ENCODE measurements at regions of chr7 and their contacts with region 1.

Region 1: DNA sequence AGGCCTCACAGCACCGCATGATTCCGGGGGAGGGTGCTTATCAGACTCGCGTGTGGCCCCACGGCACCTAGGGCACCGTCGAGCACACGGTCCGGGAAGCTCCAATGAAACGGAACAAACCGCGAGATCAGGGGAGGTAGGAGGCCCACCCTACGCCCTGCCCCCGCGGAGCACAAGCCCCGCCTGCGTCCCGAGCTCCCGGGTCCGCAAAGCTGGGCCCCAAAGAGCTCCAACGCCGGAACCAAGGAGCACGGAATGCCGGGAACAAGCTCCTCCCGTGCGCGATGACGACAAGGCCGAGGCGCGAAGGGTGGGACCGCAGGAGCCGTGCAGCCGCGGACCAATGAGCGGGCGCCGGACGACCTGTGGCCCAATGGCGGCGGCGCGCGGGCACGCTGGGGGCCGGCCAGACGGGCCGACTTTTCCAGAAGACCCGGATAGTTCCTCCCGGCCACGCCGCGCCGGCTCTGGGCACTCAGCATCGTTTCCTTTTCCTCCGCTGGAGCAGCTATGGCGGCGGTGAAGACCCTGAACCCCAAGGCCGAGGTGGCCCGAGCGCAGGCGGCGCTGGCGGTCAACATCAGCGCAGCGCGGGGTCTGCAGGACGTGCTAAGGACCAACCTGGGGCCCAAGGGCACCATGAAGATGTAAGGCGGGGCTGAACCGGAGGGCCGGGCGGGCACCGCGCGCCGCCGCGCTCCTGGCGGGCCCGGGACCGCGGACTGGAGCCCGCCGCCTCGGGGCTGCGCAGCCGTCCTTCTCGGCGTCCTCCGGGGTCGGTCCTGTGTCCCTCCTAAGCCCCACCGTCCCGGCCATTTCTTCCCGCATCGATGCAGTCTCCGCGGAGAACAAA is at the starts of genes CCT6A and PSPH:
- DNase-seq: peak; percentile 86 to 94
- ATAC-seq: peak; percentile 94 to 98 (median 96)
- H3K4me3 ChIP-seq: peak within 1 kb of the TSS; percentile 74
- H3K4me3 Mint-ChIP-seq: peak within 1 kb of the TSS; percentile 88
- H3K27ac ChIP-seq: peak within 1 kb of the TSS; percentile 71
- H3K27ac Mint-ChIP-seq: peak within 1 kb of the TSS; percentile 83 to 93
- H3K4me1 ChIP-seq: peaks cover 27% of the 10 kb centered on the region
- H3K4me1 Mint-ChIP-seq: peaks cover 4 to 18% of the 10 kb centered on the region in 2 donors
- H3K27me3 ChIP-seq: no peaks in the 10 kb centered on the region
- H3K27me3 Mint-ChIP-seq: no peaks in the 10 kb centered on the region
- CTCF ChIP-seq: no peak
- total RNA-seq, gene CCT6A: 48.1 to 65.3 (median 48.3) TPM
- total RNA-seq, gene PSPH: 2.8 to 4.1 (median 3.8) TPM

Region 2: DNA sequence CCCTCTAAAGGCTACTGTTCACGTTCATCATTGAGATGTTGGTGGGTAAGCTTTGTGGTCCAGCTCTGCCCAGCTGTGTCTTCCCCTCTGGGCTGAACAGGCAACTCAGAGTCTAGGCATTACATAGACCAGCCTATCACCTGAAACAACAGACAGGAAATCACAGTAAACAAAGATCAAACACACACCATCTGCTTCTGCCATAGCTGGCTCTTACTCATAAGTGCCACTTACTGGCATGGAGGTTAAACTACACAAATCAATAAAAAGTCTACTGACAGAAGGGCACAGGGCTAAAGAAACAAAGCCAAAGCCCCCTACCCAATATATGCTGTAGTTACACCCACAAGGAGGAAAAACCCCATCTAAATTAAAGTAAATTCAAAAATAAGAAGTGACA is 224.0 kb before region 1 on chr7:
- intact Hi-C with region 1: no loop called
- DNase-seq: no peak
- ATAC-seq: no peak
- H3K4me3 ChIP-seq: no peak overlapping the region
- H3K4me3 Mint-ChIP-seq: no peak overlapping the region
- H3K27ac ChIP-seq: no peak overlapping the region
- H3K27ac Mint-ChIP-seq: no peak overlapping the region
- H3K4me1 ChIP-seq: no peaks in the 10 kb centered on the region
- H3K4me1 Mint-ChIP-seq: no peaks in the 10 kb centered on the region
- H3K27me3 ChIP-seq: no peaks in the 10 kb centered on the region
- H3K27me3 Mint-ChIP-seq: peaks cover 0 to 8% of the 10 kb centered on the region in 2 donors
- CTCF ChIP-seq: no peak

Region 3: GRCh38 chr7:56063882-56064625 is 12.5 kb after region 1 on chr7 and contains the start of gene SUMF2:
- intact Hi-C with region 1: loop called (anchors 1 kb)
- DNase-seq: peak; percentile 92 to 97
- ATAC-seq: peak; percentile 88 to 94 (median 94)
- H3K4me3 ChIP-seq: peak within 1 kb of the TSS; percentile 99
- H3K4me3 Mint-ChIP-seq: peak within 1 kb of the TSS; percentile 95
- H3K27ac ChIP-seq: peak within 1 kb of the TSS; percentile 84
- H3K27ac Mint-ChIP-seq: peak within 1 kb of the TSS; percentile 95 to 98
- H3K4me1 ChIP-seq: peaks cover 14% of the 10 kb centered on the region
- H3K4me1 Mint-ChIP-seq: peaks cover 27 to 31% of the 10 kb centered on the region in 2 donors
- H3K27me3 ChIP-seq: no peaks in the 10 kb centered on the region
- H3K27me3 Mint-ChIP-seq: no peaks in the 10 kb centered on the region
- CTCF ChIP-seq: no peak
- total RNA-seq, gene SUMF2: 130 to 147 (median 136) TPM

Region 4: GRCh38 chr7:56106108-56107073 is 54.8 kb after region 1 on chr7 and contains the start of gene CHCHD2:
- intact Hi-C with region 1: loop called (anchors 5 kb)
- DNase-seq: peak; percentile 88 to 99
- ATAC-seq: peak; percentile 96 to 100 (median 98)
- H3K4me3 ChIP-seq: peak within 1 kb of the TSS; percentile 67
- H3K4me3 Mint-ChIP-seq: peak within 1 kb of the TSS; percentile 97
- H3K27ac ChIP-seq: peak within 1 kb of the TSS; percentile 89
- H3K27ac Mint-ChIP-seq: peak within 1 kb of the TSS; percentile 98 to 100
- H3K4me1 ChIP-seq: peaks cover 18% of the 10 kb centered on the region
- H3K4me1 Mint-ChIP-seq: peaks cover 24 to 30% of the 10 kb centered on the region in 2 donors
- H3K27me3 ChIP-seq: no peaks in the 10 kb centered on the region
- H3K27me3 Mint-ChIP-seq: no peaks in the 10 kb centered on the region
- CTCF ChIP-seq: no peak
- total RNA-seq, gene CHCHD2: 176 to 224 (median 184) TPM

Region 5: DNA sequence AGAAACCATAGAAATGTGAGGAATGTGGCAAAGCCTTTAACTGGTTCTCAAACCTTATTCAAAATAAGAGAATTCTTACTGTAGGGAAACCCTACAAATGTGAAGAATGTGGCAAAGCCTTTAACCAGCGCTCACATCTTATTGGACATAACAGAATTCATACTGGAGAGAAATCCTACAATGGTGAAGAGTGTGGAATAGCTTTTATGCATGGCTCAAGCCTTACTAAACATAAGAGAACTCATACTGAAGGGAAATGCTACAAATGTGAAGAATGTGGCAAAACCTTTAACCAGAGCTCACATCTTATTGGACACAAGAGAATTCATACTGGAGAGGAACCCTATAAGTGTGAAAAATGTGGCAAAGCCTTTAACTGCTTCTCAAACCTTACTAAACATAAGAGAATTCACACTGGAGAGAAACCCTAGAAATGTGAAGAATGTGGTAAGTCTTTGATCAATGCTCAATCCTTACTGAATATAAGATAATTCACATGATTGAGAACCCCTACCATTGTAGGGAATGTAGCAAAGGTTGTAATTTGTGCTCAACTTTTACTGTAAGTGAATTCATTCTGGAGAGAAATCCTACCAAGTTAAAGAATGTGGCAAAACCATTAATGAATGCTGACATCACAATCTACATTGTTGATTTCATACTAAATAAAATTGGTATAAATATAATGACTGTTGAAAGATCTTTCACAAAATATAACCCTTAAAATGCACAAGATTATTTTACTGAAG is 1223.1 kb after region 1 on chr7:
- intact Hi-C with region 1: no loop called
- DNase-seq: no peak
- ATAC-seq: no peak
- H3K4me3 ChIP-seq: no peak overlapping the region
- H3K4me3 Mint-ChIP-seq: no peak overlapping the region
- H3K27ac ChIP-seq: no peak overlapping the region
- H3K27ac Mint-ChIP-seq: no peak overlapping the region
- H3K4me1 ChIP-seq: no peaks in the 10 kb centered on the region
- H3K4me1 Mint-ChIP-seq: no peaks in the 10 kb centered on the region
- H3K27me3 ChIP-seq: no peaks in the 10 kb centered on the region
- H3K27me3 Mint-ChIP-seq: no peaks in the 10 kb centered on the region
- CTCF ChIP-seq: no peak